ENCODE measurements at regions of chr4 and their contacts with region 1.

Region 1: DNA sequence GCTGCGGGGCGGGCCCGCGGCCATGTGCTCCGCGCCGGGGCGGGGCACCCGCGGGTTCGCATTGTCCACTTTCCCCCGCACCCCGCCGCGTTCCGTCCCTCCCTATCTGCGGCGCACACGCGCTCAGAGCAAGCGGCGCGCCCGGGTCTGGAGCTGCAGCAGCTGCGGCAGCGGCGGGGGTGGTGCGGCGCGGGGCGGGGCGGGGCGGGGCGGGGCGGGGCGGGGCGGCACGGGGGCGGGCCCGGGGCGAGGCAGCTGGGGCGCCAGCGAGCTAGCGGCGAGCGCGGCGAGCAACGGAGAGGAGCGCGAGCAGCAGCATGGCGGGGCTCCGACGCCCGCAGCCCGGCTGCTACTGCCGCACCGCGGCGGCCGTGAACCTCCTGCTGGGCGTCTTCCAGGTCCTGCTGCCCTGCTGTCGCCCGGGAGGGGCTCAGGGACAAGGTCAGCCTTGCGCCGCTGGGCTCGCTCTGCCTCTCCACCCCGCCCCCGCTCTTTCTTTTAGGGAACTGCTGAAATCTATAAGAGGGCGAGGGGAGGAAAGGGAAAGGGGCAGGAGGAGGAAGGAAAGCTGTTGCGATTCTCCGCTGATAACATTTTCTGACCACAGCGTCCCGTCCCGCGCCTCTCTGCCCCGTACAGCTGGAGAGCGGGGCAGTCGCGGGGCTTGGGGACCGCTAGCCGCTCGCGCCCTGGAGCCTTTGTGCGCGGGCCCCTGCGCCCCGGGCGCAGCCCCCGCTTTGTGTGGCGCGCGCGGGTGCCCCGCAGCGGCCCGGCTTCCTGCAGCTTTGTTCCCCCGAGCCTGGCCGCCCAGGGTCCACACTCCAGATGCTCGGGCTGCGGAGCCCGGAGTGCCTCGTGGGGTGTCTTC is at the start of gene TMEM131L:
- DNase-seq: peak; percentile 76
- ATAC-seq: peak; percentile 72
- H3K4me3 Mint-ChIP-seq: peak within 1 kb of the TSS; percentile 88
- H3K27ac Mint-ChIP-seq: 0 out of 2 replicates have a peak within 1 kb of the TSS, but pooled peaks have one; percentile 84
- H3K4me1 Mint-ChIP-seq: peaks cover 32% of the 10 kb centered on the region
- H3K27me3 Mint-ChIP-seq: peaks cover 8% of the 10 kb centered on the region
- CTCF ChIP-seq: no peak
- total RNA-seq, gene TMEM131L: 18.1 to 26.7 TPM (median 19.2 TPM) in 3 replicates

Region 2: DNA sequence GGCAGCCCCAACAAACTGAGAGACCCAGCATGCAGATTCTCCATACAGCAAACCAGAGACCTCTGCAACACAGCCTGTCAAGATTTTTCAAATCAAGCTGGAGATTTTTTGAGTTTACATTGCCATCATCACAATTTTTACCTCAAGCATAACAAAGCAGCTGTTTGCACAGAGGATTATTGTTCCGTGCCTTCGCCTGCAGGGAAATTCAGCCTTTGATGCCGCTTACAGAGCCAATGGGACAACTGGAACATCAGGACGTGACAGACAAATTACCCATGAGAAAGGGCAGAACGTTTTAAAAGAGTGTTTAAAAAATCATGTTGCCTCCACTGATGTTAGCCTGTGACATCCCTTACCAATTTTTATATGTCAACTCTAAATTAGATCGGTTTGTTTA is 1294.2 kb before region 1 on chr4:
- CTCF ChIA-PET with region 1: no interaction called
- POLR2A ChIA-PET with region 1: no interaction called
- DNase-seq: no peak
- ATAC-seq: no peak
- H3K4me3 Mint-ChIP-seq: no peak overlapping the region
- H3K27ac Mint-ChIP-seq: no peak overlapping the region
- H3K4me1 Mint-ChIP-seq: peaks cover 10% of the 10 kb centered on the region
- H3K27me3 Mint-ChIP-seq: no peaks in the 10 kb centered on the region
- CTCF ChIP-seq: no peak

Region 3: DNA sequence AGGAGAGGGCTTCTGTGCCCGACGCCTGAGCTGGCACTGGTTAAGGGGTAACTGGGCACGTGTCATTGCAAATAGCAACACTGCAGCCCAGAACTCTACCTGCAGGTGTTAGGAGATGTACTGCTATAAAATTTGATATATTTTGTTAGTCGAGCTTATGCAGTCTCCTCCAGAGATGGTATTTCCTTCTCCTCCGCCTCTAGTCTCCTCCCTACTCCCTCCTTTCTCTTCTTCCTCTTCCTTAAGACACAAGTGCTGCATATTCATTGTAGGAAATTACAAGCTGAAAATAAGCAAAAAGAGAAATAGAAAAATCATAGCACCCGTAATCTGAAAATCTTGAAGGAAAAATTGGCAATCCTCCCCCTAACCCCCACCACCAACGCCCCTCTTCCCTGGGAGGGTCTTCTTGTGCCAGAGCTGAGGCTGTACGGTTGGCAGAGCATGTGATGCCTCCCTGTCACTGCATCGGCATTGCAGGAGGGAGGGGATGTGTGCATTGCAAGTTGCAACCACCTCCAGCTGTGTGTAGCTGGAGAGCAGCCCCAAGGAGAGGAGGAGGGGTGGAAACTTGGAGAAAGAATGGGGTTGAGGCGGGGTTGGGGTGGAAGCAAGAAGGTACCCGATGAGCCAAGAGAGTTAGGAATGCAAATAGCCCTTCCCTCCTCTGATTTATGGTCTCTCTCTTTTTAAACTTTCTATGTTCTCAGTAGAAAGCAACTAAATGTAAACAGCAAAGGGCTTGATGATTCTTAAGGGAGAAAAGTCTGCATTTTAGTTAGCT is 170.1 kb before region 1 on chr4:
- CTCF ChIA-PET with region 1: no interaction called
- POLR2A ChIA-PET with region 1: no interaction called
- DNase-seq: peak; percentile 17
- ATAC-seq: peak; percentile 63
- H3K4me3 Mint-ChIP-seq: no peak overlapping the region
- H3K27ac Mint-ChIP-seq: peak overlapping the region; percentile 72
- H3K4me1 Mint-ChIP-seq: peaks cover 28% of the 10 kb centered on the region
- H3K27me3 Mint-ChIP-seq: no peaks in the 10 kb centered on the region; the same call in 1 of the 2 replicates
- CTCF ChIP-seq: no peak

Region 4: GRCh38 chr4:153432968-153433753 is 33.2 kb before region 1 on chr4:
- CTCF ChIA-PET with region 1: interaction called, 11 read pairs
- POLR2A ChIA-PET with region 1: interaction called, 3 read pairs
- DNase-seq: peak; percentile 58
- ATAC-seq: peak; percentile 79
- H3K4me3 Mint-ChIP-seq: no peak overlapping the region
- H3K27ac Mint-ChIP-seq: no peak overlapping the region
- H3K4me1 Mint-ChIP-seq: peaks cover 8% of the 10 kb centered on the region
- H3K27me3 Mint-ChIP-seq: no peaks in the 10 kb centered on the region
- CTCF ChIP-seq: peak; percentile 45; the same call in 1 of the 2 replicates

Region 5: DNA sequence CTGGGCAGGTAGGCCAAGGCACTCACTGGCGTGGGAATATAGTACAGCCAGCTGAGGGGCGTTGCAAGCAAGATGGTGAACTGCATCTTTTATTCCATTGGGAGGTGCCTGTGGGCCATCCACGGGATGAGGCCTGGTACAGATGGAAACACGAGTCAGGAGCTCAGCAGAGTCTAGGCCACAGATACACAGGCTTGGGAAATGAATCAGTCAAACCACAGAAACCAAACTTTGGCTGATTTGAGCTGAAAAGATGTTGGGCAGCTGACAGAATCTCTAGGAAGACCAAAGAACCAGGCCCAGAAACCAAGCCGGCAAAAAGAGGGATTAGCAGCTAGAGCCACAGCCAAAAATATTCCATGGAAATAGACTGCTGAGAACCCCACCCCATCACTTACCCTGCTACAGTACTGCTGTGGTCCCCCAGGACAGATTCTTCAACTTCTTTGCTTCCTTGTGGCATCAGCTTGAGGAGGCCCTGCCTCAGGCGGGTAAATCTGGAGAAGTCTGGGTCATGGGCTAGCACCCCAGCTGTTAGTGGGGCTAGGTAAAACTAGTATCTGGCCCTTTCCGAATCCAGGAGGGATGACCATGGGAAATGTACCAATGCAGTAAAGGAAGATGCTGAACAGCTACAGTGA is 75.3 kb after region 1 on chr4:
- CTCF ChIA-PET with region 1: interaction called, 14 read pairs
- POLR2A ChIA-PET with region 1: no interaction called
- DNase-seq: no peak
- ATAC-seq: no peak
- H3K4me3 Mint-ChIP-seq: no peak overlapping the region
- H3K27ac Mint-ChIP-seq: no peak overlapping the region; the same call in 1 of the 2 replicates
- H3K4me1 Mint-ChIP-seq: peaks cover 55% of the 10 kb centered on the region
- H3K27me3 Mint-ChIP-seq: no peaks in the 10 kb centered on the region
- CTCF ChIP-seq: no peak

Region 6: GRCh38 chr4:153781717-153782416 is 315.6 kb after region 1 on chr4:
- CTCF ChIA-PET with region 1: no interaction called
- POLR2A ChIA-PET with region 1: no interaction called
- DNase-seq: peak; percentile 38
- ATAC-seq: peak; percentile 62
- H3K4me3 Mint-ChIP-seq: peak overlapping the region; percentile 33; the same call in 1 of the 2 replicates
- H3K27ac Mint-ChIP-seq: peak overlapping the region; percentile 89
- H3K4me1 Mint-ChIP-seq: peaks cover 59% of the 10 kb centered on the region
- H3K27me3 Mint-ChIP-seq: no peaks in the 10 kb centered on the region
- CTCF ChIP-seq: no peak

Measured in WTC11 (cell line).